HepG2 (cell line): ENCODE measurements at regions of chr7 and their contacts with region 1.

Region 1: GRCh38 chr7:29189743-29190201 is 4.8 kb upstream of the CHN2 start:
- DNase-seq: peak; percentile 74
- ATAC-seq: peak; percentile 75
- H3K4me3 ChIP-seq: peak overlapping the region; percentile 51 to 72 (median 55)
- H3K27ac ChIP-seq: peak overlapping the region; percentile 84
- H3K4me1 ChIP-seq: peaks cover 54% of the 10 kb centered on the region
- H3K27me3 ChIP-seq: no peaks in the 10 kb centered on the region; a peak in 1 of 5 replicates
- CTCF ChIP-seq: peak; percentile 97
- EP300 ChIP-seq: 0 out of 4 replicates have a peak, but pooled peaks of 1 of the 2 experiments have one; percentile 22
- POLR2A ChIP-seq: no peak
- RAD21 ChIP-seq: peak; percentile 94

Region 2: DNA sequence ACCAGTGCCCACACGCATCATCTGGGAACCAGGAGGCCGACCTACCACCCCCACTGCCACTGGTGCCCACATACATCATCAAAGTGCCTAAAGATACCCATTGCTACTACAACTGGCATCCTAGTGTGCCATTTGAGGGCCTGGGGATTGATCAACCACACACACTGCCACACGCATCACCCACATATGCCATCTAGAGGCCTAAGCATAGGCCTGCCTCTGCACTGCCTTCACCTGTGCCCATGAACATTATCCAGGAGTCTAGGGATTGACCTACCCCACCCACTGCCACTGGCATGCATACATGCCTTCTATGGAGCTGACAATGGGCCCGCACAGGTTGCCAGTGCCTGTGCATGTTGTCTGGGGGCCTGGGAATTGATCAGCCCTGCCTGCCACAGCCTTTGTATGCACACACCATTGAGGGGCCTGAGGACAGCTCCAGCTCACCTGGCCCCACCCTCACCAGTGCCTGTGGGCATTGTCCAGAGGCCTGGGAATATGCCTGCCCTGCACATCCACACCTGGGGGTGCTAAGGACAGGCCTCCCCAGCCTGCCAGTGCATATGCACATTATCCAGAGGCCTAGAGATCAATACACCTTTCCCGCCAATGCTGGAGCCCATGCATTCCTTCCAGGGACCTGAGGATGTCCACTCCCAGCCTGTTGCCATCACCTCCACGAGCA is 167.3 kb before region 1 on chr7:
- CTCF ChIA-PET with region 1: no interaction called
- POLR2A ChIA-PET with region 1: no interaction called
- in situ Hi-C with region 1: no loop called
- intact Hi-C with region 1: no loop called
- DNase-seq: no peak
- ATAC-seq: no peak
- H3K4me3 ChIP-seq: no peak overlapping the region
- H3K27ac ChIP-seq: no peak overlapping the region
- H3K4me1 ChIP-seq: no peaks in the 10 kb centered on the region
- H3K27me3 ChIP-seq: no peaks in the 10 kb centered on the region
- CTCF ChIP-seq: no peak
- EP300 ChIP-seq: no peak
- POLR2A ChIP-seq: no peak
- RAD21 ChIP-seq: no peak

Region 3: GRCh38 chr7:29053105-29053872 is 136.5 kb before region 1 on chr7:
- CTCF ChIA-PET with region 1: no interaction called
- POLR2A ChIA-PET with region 1: no interaction called
- in situ Hi-C with region 1: no loop called
- intact Hi-C with region 1: no loop called
- DNase-seq: no peak
- ATAC-seq: no peak
- H3K4me3 ChIP-seq: no peak overlapping the region
- H3K27ac ChIP-seq: no peak overlapping the region
- H3K4me1 ChIP-seq: no peaks in the 10 kb centered on the region
- H3K27me3 ChIP-seq: no peaks in the 10 kb centered on the region
- CTCF ChIP-seq: no peak
- EP300 ChIP-seq: no peak
- POLR2A ChIP-seq: no peak
- RAD21 ChIP-seq: no peak

Region 4: GRCh38 chr7:29146057-29146706 is 43.6 kb before region 1 on chr7 and contains the start of gene CPVL:
- CTCF ChIA-PET with region 1: no interaction called
- POLR2A ChIA-PET with region 1: interaction called, 23 read pairs
- in situ Hi-C with region 1: no loop called
- intact Hi-C with region 1: no loop called
- DNase-seq: peak; percentile 71
- ATAC-seq: peak; percentile 84
- H3K4me3 ChIP-seq: peak within 1 kb of the TSS; percentile 75 to 85 (median 78)
- H3K27ac ChIP-seq: peak within 1 kb of the TSS; percentile 68
- H3K4me1 ChIP-seq: peaks cover 66% of the 10 kb centered on the region
- H3K27me3 ChIP-seq: no peaks in the 10 kb centered on the region; a peak in 1 of 5 replicates
- CTCF ChIP-seq: no peak
- EP300 ChIP-seq: no peak
- POLR2A ChIP-seq: peak; percentile 69 to 73
- RAD21 ChIP-seq: no peak
- total RNA-seq, gene CPVL: 30.7 and 59.2 TPM in 2 replicates

Region 5: GRCh38 chr7:29228289-29229011 is 38.7 kb after region 1 on chr7:
- CTCF ChIA-PET with region 1: no interaction called
- POLR2A ChIA-PET with region 1: interaction called, 28 read pairs
- in situ Hi-C with region 1: no loop called
- intact Hi-C with region 1: loop called (anchors 5 kb)
- DNase-seq: peak; percentile 92
- ATAC-seq: peak; percentile 79
- H3K4me3 ChIP-seq: peak overlapping the region in 1 of 3 experiments; percentile 36; a peak in 2 of 6 replicates
- H3K27ac ChIP-seq: peak overlapping the region; percentile 79
- H3K4me1 ChIP-seq: peaks cover 80% of the 10 kb centered on the region
- H3K27me3 ChIP-seq: no peaks in the 10 kb centered on the region
- CTCF ChIP-seq: no peak
- EP300 ChIP-seq: peak; percentile 89 to 94
- POLR2A ChIP-seq: no peak
- RAD21 ChIP-seq: peak; percentile 41; the same call in 1 of the 2 replicates

Region 6: DNA sequence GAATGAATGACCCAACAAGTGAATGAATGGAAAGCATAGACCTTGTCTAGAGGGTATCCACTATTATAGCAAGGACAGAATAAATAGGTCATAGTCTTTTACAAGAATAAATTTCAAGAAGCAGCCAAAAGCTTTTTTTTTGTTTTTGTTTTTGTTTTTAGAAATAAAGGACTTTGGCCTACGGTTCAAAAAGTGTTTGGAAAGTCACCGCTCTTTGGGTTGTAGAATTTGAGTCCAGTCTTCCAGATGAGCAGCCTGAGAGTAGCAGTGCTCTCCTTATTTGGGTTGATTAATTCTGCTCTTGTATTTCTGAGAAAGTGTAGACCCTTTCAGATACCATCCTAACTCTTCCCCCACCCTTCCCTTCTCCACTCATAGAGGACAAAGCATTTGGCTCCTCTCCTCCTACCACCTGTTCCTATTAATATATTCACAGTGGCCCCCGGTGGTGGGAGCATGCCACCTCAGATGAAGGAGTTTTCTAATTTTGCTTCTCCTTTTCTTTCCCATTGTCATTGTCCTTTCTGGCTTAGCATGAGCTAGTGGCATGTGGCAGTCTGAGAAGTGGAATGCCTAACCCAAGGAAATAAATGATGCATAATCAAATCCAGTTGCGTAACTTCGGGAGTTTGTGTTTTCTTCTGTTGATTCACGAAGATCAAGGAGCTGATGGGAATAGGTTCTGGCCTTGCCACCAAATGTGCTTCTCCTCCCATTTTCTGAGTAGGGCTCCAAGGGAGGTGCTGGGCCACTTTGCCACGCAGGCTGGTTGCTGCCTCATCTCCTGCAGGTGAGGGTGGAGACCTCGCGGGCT is 119.5 kb after region 1 on chr7:
- CTCF ChIA-PET with region 1: interaction called, 4 read pairs
- POLR2A ChIA-PET with region 1: interaction called, 3 read pairs
- in situ Hi-C with region 1: no loop called
- intact Hi-C with region 1: loop called (anchors 1 kb)
- DNase-seq: peak; percentile 28
- ATAC-seq: peak; percentile 82
- H3K4me3 ChIP-seq: no peak overlapping the region
- H3K27ac ChIP-seq: no peak overlapping the region
- H3K4me1 ChIP-seq: peaks cover 32% of the 10 kb centered on the region
- H3K27me3 ChIP-seq: no peaks in the 10 kb centered on the region
- CTCF ChIP-seq: peak; percentile 63
- EP300 ChIP-seq: no peak
- POLR2A ChIP-seq: no peak
- RAD21 ChIP-seq: peak; percentile 50; the same call in 1 of the 2 replicates

Region 7: DNA sequence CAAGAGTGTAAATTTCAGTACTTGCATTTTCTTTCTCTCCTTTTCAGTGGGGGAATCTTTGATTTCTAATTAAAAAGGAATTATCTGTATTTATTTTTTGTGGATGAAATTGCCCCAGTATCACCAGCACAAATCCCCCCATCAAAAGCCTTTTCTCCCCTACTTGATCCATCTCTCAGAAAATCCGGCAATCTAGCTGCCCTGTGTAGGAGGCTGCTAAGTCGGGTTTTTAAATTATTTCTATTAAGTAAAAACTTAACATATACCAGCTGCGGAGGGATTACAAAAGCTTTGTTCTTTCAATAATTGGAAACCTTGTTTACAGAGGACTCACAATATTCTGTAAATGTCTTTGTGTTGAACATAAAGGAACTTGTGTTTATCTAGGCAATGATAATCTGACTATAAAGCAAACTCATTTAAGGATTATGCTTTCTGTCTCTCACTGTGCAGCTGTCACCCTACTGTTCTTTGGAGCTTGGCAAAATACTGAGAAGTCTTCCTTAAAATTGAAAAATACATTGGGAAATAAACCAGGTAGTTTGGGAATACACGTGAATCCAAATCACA is 196.5 kb after region 1 on chr7:
- CTCF ChIA-PET with region 1: no interaction called
- POLR2A ChIA-PET with region 1: no interaction called
- in situ Hi-C with region 1: no loop called
- intact Hi-C with region 1: no loop called
- DNase-seq: no peak
- ATAC-seq: no peak
- H3K4me3 ChIP-seq: no peak overlapping the region
- H3K27ac ChIP-seq: no peak overlapping the region
- H3K4me1 ChIP-seq: peaks cover 26% of the 10 kb centered on the region
- H3K27me3 ChIP-seq: no peaks in the 10 kb centered on the region
- CTCF ChIP-seq: no peak
- EP300 ChIP-seq: no peak
- POLR2A ChIP-seq: no peak
- RAD21 ChIP-seq: no peak

Region 8: DNA sequence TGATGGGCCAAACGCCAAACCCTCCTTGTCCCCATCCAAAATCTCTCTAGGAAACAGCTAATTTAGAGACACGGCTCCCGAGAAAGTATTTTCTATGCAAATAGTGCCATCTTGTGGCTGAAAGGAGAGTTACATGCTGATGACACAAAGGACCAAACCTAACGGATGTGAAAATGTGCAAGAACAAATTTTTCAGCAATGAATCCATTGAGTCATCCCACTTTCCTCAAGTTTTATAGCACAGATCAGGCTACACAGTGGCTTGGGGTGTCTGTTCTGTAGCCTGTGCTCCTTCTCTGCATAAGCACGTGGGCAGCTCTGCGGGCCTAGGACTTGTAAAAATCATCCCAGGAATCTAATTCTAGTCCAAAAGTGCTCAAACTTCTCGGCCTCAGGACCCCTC is 219.1 kb after region 1 on chr7:
- CTCF ChIA-PET with region 1: interaction called, 3 read pairs
- POLR2A ChIA-PET with region 1: interaction called, 11 read pairs
- in situ Hi-C with region 1: no loop called
- intact Hi-C with region 1: loop called (anchors 1 kb)
- DNase-seq: peak; percentile 61
- ATAC-seq: 0 out of 3 replicates have a peak, but pooled peaks have one; percentile 10
- H3K4me3 ChIP-seq: no peak overlapping the region
- H3K27ac ChIP-seq: no peak overlapping the region
- H3K4me1 ChIP-seq: peaks cover 51% of the 10 kb centered on the region
- H3K27me3 ChIP-seq: no peaks in the 10 kb centered on the region
- CTCF ChIP-seq: peak; percentile 87
- EP300 ChIP-seq: no peak
- POLR2A ChIP-seq: no peak
- RAD21 ChIP-seq: peak; percentile 80

Region 9: GRCh38 chr7:29780346-29780745 is 590.6 kb after region 1 on chr7:
- CTCF ChIA-PET with region 1: no interaction called
- POLR2A ChIA-PET with region 1: no interaction called
- in situ Hi-C with region 1: no loop called
- intact Hi-C with region 1: no loop called
- DNase-seq: no peak
- ATAC-seq: no peak
- H3K4me3 ChIP-seq: no peak overlapping the region
- H3K27ac ChIP-seq: no peak overlapping the region
- H3K4me1 ChIP-seq: no peaks in the 10 kb centered on the region
- H3K27me3 ChIP-seq: peaks cover 0 to 5% of the 10 kb centered on the region in 2 experiments; a peak in 1 of 5 replicates
- CTCF ChIP-seq: no peak
- EP300 ChIP-seq: no peak
- POLR2A ChIP-seq: no peak
- RAD21 ChIP-seq: no peak